Activated T-helper 1 cell treated with anti-CD3 and anti-CD28 coated beads, Interleukin-12 subunit alpha, Interleukin-12 subunit beta, Interleukin-2, Interleukin-4 antibody, amounts not matched to agents 30 ng/mL and 10 ng/mL and 1 ng/mL, durations not matched to agents 14 hours and 24 hours and 36 hours (primary cell): ENCODE measurements at regions of chr4 and their contacts with region 1.

Region 1: GRCh38 chr4:40255393-40256281 is 58.8 kb downstream of the RHOH start:
- DNase-seq: no peak
- H3K4me3 Mint-ChIP-seq: peak overlapping the region; percentile 42
- H3K27ac Mint-ChIP-seq: peak overlapping the region; percentile 93
- H3K4me1 Mint-ChIP-seq: peaks cover 67% of the 10 kb centered on the region
- H3K27me3 Mint-ChIP-seq: no peaks in the 10 kb centered on the region

Region 2: DNA sequence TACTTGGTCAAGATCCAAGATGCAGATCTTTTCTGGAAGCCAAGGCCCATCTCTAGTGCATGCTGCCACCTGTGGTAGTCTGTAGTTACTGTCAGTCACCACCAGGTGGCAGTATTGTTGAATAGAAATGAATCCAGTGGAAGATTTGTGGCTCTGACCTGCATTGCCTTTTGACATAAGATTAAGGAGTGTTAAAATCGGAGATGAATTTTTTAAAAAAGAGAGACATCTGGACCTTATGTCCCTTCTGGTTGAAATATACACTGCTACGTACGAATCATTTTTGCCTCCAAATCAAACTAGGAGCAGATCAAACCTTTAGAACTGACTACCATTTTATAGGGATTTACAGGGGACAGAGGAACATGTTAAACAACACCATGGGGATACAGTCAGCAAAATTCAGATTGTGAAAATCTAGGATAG is 105.7 kb before region 1 on chr4:
- intact Hi-C with region 1: loop called (anchors 1 kb)
- DNase-seq: peak; percentile 67
- H3K4me3 Mint-ChIP-seq: no peak overlapping the region
- H3K27ac Mint-ChIP-seq: peak overlapping the region; percentile 48
- H3K4me1 Mint-ChIP-seq: no peaks in the 10 kb centered on the region
- H3K27me3 Mint-ChIP-seq: no peaks in the 10 kb centered on the region

Region 3: DNA sequence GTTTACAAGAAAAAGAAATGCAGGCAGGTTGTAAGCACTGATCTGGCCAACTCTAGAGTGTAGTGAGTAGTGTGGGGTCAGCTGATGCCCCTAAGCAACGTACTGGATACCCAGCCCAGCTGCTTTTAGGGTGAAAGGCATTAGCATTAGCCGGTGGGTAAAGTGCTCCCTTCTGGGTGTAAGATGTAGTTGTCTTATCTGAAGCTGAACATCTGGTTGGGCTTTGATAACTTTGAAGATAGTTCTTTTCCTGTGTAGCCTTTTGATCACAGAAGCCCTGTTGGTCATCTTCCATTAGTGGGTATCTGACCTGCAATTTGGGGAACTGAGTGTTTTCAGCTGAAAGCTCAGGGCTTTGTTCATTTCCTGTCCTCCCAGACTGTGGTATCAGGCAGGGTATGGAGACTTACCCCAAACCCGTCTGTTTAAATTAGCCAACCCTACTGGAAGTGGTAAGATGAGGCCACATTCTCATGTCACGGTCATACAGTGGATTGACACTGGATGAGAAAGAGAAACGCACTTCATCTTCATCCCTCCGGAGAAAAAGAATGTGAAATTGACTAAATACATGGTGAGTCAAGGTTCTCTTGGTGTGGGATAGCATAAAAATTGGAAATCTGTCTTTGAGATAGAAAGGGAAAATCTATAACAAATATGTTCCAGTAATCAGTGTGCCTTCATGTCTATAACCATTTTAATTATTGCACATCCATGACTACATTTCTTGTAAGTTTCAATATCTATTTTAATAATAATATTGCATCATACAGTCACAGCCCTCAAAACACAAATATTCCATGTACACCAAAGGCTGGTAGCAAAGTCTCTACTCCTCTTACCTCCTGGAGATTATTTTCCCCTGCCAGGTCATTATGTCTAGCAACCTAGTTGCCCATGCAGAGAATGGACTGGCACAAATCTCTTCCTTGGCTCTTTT is 50.1 kb before region 1 on chr4:
- intact Hi-C with region 1: loop called (anchors 1 kb)
- DNase-seq: no peak
- H3K4me3 Mint-ChIP-seq: peak overlapping the region; percentile 95
- H3K27ac Mint-ChIP-seq: peak overlapping the region; percentile 97
- H3K4me1 Mint-ChIP-seq: peaks cover 82% of the 10 kb centered on the region
- H3K27me3 Mint-ChIP-seq: no peaks in the 10 kb centered on the region

Region 4: GRCh38 chr4:40238700-40239548 is 16.7 kb before region 1 on chr4:
- intact Hi-C with region 1: loop called (anchors 1 kb)
- DNase-seq: peak; percentile 72
- H3K4me3 Mint-ChIP-seq: peak overlapping the region; percentile 83
- H3K27ac Mint-ChIP-seq: peak overlapping the region; percentile 92
- H3K4me1 Mint-ChIP-seq: peaks cover 90% of the 10 kb centered on the region
- H3K27me3 Mint-ChIP-seq: no peaks in the 10 kb centered on the region

Region 5: GRCh38 chr4:40283968-40284367 is 28.3 kb after region 1 on chr4:
- intact Hi-C with region 1: loop called (anchors 1 kb)
- DNase-seq: peak; percentile 54
- H3K4me3 Mint-ChIP-seq: peak overlapping the region; percentile 32
- H3K27ac Mint-ChIP-seq: peak overlapping the region; percentile 84
- H3K4me1 Mint-ChIP-seq: peaks cover 56% of the 10 kb centered on the region
- H3K27me3 Mint-ChIP-seq: no peaks in the 10 kb centered on the region

Region 6: DNA sequence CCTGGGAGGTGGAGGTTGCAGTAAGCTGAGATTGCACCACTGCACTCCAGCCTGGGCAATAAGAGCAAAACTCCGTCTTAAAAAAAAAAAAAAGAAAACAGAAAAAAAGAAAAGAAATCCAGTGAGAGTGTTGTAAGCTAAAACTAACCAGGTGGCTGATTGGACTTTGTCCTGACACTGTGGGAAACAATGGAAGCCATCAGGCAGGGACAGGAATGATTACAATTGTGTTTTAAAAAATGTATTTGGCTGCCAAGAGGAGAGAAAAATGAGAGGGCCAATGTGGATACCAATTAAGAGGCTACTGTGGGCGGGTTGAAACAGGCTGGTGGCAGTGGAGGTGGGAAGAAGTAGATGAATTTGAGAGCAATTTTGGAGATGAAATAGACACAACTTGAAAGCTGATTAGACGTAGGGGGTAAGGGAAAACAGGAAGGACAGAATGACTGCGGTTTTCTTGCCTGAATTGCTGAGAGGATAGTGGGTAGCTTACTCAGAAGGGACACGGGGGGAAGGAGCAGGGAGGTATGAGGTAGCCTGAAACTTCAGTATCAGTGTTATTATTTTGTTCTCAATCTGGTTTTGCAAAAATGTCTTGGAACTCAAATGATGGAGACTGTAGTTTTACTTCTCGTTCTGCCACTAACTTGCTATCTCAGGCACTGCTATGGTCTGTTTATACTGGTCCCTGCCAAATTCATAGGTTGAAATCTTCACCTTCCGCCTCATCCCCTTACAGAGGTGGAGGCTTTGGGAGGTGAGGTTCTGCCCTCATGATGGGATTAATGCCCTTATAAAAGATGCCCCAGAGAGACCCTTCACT is 33.9 kb after region 1 on chr4:
- intact Hi-C with region 1: loop called (anchors 1 kb)
- DNase-seq: no peak
- H3K4me3 Mint-ChIP-seq: peak overlapping the region; percentile 31
- H3K27ac Mint-ChIP-seq: peak overlapping the region; percentile 78
- H3K4me1 Mint-ChIP-seq: peaks cover 56% of the 10 kb centered on the region
- H3K27me3 Mint-ChIP-seq: no peaks in the 10 kb centered on the region

Region 7: DNA sequence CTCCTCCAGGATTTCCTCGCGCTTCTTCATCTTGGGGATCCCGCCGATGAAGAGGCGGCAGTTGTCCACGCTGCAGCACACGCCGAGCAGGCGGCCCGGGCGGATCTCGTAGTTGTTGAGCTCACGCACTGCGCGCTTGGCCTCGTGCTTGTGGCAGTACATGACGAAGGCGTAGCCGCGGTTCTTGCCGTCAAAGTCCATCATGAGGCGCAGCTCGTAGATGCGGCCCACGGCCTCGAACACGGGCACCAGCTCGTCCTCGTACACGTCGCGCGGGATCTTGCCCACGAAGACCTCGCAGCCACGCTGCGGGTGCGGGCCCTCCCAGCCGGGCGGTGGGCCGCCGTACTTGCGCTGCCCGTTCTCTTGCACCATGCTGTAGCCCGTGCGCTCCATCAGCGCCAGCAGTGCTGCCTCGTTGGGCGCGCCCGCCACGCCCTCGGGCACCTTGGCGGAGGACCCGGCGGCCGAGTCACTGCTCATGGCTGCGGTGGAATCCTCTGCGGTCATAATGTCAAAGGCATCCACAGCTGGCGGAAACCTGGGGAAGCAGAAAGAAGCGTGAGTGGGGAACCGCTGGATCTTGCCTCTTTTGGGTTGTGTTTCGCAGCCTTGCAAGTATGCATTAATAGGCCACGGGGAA is 182.9 kb after region 1 on chr4:
- intact Hi-C with region 1: loop called (anchors 10 kb)
- DNase-seq: no peak
- H3K4me3 Mint-ChIP-seq: peak overlapping the region; percentile 3
- H3K27ac Mint-ChIP-seq: peak overlapping the region; percentile 8
- H3K4me1 Mint-ChIP-seq: peaks cover 54% of the 10 kb centered on the region
- H3K27me3 Mint-ChIP-seq: no peaks in the 10 kb centered on the region

Region 8: GRCh38 chr4:40800064-40800463 is 544.4 kb after region 1 on chr4:
- intact Hi-C with region 1: no loop called
- DNase-seq: no peak
- H3K4me3 Mint-ChIP-seq: no peak overlapping the region
- H3K27ac Mint-ChIP-seq: no peak overlapping the region
- H3K4me1 Mint-ChIP-seq: no peaks in the 10 kb centered on the region
- H3K27me3 Mint-ChIP-seq: peaks cover 2% of the 10 kb centered on the region